Natural killer cell (primary cell): ENCODE measurements at regions of chrX and their contacts with region 1.

Region 1: DNA sequence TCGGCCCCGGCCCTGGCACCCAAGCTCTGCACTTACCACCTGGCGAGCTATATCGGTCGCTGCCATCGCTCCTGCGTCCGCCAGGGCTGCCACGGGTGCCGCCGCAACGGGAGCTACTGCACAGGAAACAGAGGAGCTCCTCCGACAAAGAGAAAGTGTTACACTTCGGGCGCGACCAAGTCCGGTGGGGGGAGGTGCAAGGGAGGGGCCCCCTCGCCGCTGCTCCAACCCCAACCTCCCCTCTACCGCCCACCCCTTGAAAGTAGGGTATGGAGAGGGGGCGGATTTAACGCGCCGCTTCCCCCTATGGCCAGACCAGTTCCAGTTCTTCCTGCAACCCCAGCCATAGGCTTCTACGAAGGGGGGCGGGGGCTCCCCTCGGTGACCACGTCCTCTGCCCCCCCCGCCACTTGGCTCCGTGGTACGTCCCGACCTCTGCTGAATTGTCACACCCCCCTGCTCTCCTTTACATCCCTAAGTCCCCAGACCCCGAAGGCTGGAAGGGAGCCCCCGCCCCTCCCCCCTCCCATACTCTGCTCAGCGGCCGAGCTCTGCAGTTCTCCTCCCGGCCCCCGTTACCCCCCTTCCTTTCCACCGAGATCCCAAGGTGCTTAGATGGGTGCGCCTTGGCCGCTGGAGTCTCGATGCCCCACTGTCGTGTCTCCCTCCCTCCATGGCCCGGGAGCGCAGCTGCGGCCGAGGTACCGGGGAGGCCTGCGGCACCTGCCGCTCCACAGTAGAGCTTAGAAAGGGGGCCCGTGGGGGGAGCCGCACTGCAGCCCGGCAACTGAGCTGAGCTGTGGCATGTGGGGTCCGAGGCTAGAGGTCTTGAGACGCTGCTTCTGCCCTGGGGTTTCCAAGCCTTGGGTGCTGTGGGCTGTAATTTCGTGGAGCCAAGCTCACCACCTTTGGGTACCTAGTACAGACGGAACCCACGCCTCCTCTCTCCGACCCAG is at the start of gene SEPTIN6:
- DNase-seq: peak; percentile 78 to 88
- ATAC-seq: peak; percentile 62 to 86 (median 73)
- H3K4me3 ChIP-seq: peak within 1 kb of the TSS; percentile 68
- H3K4me3 Mint-ChIP-seq: peak within 1 kb of the TSS; percentile 95
- H3K27ac ChIP-seq: peak within 1 kb of the TSS; percentile 75
- H3K27ac Mint-ChIP-seq: peak within 1 kb of the TSS; percentile 96 to 98
- H3K4me1 ChIP-seq: peaks cover 46% of the 10 kb centered on the region
- H3K4me1 Mint-ChIP-seq: peaks cover 26 to 47% of the 10 kb centered on the region in 2 donors
- H3K27me3 ChIP-seq: no peaks in the 10 kb centered on the region
- H3K27me3 Mint-ChIP-seq: no peaks in the 10 kb centered on the region
- CTCF ChIP-seq: no peak
- total RNA-seq, gene SEPTIN6: 138 to 202 (median 158) TPM

Region 2: DNA sequence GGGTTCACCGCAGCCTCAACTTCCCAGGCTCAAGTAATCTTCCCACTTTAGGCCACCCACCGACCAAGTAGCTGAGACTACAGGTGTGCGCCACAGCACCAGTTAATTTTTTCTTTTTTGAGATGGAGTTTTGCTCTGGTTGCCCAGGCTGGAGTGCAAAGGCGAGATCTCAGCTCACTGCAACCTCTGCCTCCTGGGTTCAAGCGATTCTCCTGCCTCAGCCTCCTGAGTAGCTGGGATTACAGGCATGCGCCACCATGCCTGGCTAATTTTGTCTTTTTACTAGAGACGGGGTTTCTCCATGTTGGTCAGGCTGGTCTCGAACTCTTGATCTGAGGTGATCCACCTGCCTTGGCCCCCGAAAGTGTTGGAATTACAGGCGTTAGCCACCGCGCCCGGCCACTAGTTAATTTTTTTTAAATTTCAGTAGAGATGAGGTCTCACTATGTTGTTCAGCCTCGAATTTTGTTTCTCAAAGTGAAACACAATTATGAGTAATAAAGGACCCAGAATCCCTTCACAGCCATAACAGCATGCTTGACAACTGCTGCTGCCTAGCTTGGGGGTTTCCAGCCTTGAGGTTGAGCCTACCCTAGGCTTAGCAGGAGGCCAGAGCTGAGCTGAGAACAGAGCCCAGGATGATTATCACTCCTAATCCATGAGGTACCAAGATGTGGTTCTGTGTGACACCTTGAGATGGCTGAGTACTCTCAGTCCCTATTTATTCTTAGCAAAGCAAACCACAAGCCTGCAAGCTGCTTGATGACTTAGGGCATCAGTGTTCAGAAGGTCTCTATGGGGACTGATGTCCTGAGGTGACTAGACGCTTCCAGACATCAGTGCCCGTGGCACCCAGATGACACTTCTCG is 45.5 kb before region 1 on chrX:
- intact Hi-C with region 1: loop called (anchors 5 kb)
- DNase-seq: peak in 1 of 2 donors; percentile 80
- ATAC-seq: peak; percentile 83 to 87 (median 85)
- H3K4me3 ChIP-seq: no peak overlapping the region
- H3K4me3 Mint-ChIP-seq: no peak overlapping the region
- H3K27ac ChIP-seq: peak overlapping the region; percentile 59
- H3K27ac Mint-ChIP-seq: peak overlapping the region; percentile 72 to 84
- H3K4me1 ChIP-seq: peaks cover 22% of the 10 kb centered on the region
- H3K4me1 Mint-ChIP-seq: peaks cover 14 to 29% of the 10 kb centered on the region in 2 donors
- H3K27me3 ChIP-seq: no peaks in the 10 kb centered on the region
- H3K27me3 Mint-ChIP-seq: no peaks in the 10 kb centered on the region
- CTCF ChIP-seq: no peak

Region 3: GRCh38 chrX:119916310-119916709 is 223.0 kb after region 1 on chrX:
- intact Hi-C with region 1: no loop called
- DNase-seq: no peak
- ATAC-seq: no peak
- H3K4me3 ChIP-seq: no peak overlapping the region
- H3K4me3 Mint-ChIP-seq: no peak overlapping the region
- H3K27ac ChIP-seq: no peak overlapping the region
- H3K27ac Mint-ChIP-seq: no peak overlapping the region
- H3K4me1 ChIP-seq: no peaks in the 10 kb centered on the region
- H3K4me1 Mint-ChIP-seq: no peaks in the 10 kb centered on the region
- H3K27me3 ChIP-seq: no peaks in the 10 kb centered on the region
- H3K27me3 Mint-ChIP-seq: no peaks in the 10 kb centered on the region
- CTCF ChIP-seq: no peak